ENCODE measurements at regions of chr6 and their contacts with region 1.

Region 1: DNA sequence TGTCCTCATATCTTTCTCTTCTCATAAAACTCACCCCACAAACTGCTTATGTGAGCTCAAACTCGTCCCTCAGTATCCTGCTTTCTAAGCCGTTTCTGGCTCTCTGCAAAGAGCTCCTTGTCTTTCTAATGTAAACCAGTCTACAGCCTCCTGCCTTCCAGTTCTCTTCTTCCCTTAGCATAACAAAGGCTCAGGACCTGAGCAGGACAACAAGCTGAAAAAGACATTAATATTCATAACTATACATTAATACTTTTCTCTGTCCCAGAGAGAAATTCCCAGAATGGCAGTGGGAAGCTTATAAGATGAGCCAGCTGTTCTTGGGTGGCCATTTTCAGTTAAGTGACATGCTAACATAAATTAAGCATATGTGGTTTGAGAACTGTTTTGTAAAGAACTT is 207.0 kb upstream of the TCF21 start:
- DNase-seq: no peak
- H3K4me3 ChIP-seq: no peak overlapping the region
- CTCF ChIP-seq: no peak

Region 2: DNA sequence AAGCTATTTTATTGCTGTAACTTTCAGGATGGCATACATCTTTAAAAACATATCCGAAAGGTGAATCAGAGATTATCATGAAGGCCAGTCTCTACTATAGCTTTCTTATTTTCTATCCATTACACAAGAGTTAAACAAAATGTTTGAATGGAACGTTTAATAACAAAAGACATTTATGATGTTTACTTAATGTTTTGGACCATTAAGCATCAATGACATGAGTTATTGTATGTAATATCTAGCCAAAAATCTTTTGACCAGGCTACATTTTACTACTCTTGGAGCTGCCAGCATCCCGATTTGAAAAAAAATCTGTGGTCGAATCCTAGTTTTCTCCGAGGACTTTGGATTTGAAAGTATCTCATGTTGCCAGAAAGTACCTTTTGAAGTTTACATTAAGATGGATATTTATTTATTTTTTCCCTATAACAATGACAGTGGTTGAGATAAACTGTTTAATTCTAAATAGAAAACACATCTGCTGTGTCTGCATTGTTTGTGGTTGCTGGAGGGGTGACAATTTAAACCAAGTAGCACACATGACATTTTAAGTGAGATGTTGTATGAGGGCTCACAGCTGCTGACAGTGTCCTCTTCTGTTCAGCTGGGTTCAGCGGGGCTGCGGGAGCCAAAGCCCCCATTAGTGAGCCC is 86.7 kb before region 1 on chr6:
- in situ Hi-C with region 1: loop called (anchors 5 kb)
- DNase-seq: no peak
- H3K4me3 ChIP-seq: no peak overlapping the region
- CTCF ChIP-seq: no peak

Region 3: DNA sequence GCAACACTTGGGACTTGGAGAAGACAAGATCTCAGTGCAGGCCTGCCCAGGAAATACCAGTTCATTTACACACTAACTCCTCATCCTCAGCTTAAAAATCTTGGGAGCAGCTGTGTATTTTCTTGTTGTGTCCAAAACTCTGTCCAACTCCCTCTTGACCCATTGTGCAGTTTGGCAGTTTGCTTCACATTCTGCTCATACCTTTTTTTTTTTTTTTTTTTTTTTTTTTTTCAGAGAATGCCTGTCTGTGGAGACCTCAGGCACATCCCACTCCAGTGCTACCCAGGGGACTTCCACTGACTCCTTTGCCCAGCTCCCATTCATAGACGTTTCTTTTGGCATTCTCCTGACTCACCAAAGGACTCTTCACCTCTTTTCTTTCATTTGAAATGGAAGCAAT is 58.8 kb before region 1 on chr6:
- in situ Hi-C with region 1: no loop called
- DNase-seq: no peak
- H3K4me3 ChIP-seq: no peak overlapping the region
- CTCF ChIP-seq: no peak

Region 4: DNA sequence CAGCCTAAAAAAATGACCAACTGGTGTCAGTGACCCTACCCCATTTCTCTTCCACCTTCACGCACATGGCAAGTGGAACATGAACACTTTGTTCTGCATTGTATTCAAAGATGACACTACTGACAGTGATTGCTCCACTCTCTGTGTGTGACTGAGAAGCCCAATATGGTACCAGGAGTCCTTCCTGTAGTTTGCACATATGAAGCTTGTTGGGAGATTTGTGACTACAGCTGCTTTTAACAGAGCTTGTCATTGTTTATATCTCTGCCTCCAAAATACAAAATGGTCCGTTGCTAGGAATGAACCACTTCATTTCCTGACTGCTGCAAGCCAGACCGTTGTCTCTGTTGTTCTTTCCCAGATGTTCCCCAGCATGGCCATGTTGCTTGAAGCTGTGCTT is 66.7 kb after region 1 on chr6:
- in situ Hi-C with region 1: loop called (anchors 5 kb)
- DNase-seq: no peak
- H3K4me3 ChIP-seq: no peak overlapping the region
- CTCF ChIP-seq: no peak